ENCODE measurements at regions of chr4 and their contacts with region 1.

Region 1: DNA sequence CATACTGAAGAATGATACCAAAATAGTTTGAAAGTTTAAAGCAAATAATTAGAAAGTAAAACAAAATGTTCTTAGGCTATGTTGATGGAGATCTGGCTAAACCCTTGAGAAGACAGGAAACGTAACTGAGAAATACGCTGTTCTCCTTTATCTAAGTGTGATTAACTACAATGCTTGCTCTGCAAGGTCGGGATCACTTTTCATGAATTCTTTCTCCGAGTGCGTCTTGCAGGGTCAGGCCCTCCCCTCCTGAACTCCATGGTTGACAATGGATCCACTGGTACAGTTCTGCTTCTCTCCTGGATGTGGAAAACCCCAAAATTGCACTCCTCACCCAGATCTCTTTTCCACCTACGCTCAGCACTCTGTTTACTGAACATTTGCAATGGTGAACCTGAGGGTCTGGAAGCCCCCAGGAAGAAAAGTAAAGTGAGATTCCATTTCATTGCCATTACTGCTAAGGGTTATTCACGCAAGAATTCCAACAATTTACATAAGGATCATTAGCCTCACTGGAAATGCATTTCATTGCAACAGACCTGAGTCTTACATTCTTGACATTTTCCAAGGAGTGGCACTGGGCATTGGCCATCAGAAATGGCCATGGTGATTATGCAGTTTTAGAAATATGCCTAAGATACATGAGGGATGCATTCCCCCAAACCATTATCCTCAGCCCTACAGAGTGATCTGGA is 24.6 kb upstream of the WWC2 start:
- DNase-seq: no peak
- H3K4me3 Mint-ChIP-seq: no peak overlapping the region
- H3K27ac Mint-ChIP-seq: no peak overlapping the region
- H3K4me1 Mint-ChIP-seq: no peaks in the 10 kb centered on the region
- H3K27me3 Mint-ChIP-seq: peaks cover 15% of the 10 kb centered on the region

Region 2: DNA sequence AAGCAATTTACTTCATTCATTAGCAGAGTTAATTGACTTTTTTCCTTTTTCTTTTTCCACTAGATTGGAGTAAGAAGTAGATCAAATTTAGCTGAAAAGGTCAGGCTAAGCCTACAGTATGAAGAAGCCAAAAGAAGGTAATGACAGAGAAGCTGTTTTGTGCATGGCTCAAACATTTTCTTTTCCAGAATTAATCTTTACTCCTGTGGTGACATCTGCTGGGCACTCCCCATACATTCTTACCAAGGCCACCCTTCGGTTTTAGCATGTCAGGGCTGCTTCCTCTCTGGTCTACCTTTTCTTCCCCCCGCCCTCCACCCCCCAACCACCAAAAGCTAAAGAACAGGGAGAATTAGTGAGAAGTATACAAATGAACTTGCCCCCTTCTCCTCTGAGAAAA is 175.4 kb after region 1 on chr4:
- CTCF ChIA-PET with region 1: interaction called, 45 read pairs
- POLR2A ChIA-PET with region 1: no interaction called
- DNase-seq: no peak
- H3K4me3 Mint-ChIP-seq: no peak overlapping the region
- H3K27ac Mint-ChIP-seq: no peak overlapping the region
- H3K4me1 Mint-ChIP-seq: no peaks in the 10 kb centered on the region
- H3K27me3 Mint-ChIP-seq: no peaks in the 10 kb centered on the region

Region 3: GRCh38 chr4:183256756-183257385 is 182.4 kb after region 1 on chr4:
- CTCF ChIA-PET with region 1: interaction called, 74 read pairs
- POLR2A ChIA-PET with region 1: no interaction called
- DNase-seq: peak; percentile 32
- H3K4me3 Mint-ChIP-seq: no peak overlapping the region
- H3K27ac Mint-ChIP-seq: no peak overlapping the region
- H3K4me1 Mint-ChIP-seq: no peaks in the 10 kb centered on the region
- H3K27me3 Mint-ChIP-seq: peaks cover 2% of the 10 kb centered on the region

Region 4: DNA sequence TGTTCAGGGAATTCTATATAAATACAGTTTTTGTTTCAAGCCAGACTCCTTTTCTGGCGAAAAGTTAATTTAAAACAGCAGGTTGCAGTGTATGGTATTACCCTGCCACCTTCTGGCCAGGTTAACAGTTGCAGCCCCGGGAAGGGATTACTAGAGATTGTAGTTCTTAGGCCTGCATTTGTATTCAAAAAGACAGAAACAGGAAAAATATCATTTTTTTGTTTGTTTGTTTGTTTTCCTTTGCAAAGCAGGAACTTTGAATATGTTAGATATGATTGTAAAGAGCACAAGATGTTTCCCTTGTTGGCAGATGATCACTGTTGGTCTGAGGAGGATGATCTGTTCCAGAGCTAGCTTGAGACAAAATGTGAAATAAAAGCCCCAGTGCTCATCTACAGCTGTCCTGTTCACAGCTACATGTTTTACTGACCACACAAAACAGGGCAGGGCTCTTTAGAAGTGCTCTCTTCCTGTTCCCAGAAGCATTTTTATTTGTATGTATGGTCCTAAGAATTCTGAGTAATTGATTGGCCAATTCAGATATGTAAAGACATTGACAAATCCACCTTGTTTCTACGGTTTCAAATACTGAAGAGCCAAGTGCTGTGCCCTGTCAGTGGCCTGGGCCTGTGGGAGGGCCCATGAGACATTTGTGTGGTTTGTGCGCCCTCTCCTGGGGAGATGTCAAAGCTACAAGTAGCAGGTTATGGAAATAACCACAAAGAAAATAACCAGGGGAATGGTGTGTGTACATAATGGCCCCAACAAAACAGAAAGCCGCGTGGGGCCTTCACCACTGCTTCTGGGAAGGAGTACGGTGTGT is 187.7 kb after region 1 on chr4:
- CTCF ChIA-PET with region 1: interaction called, 74 read pairs
- POLR2A ChIA-PET with region 1: no interaction called
- DNase-seq: peak; percentile 80
- H3K4me3 Mint-ChIP-seq: no peak overlapping the region
- H3K27ac Mint-ChIP-seq: peak overlapping the region; percentile 48
- H3K4me1 Mint-ChIP-seq: peaks cover 6% of the 10 kb centered on the region
- H3K27me3 Mint-ChIP-seq: peaks cover 2% of the 10 kb centered on the region

Measured in activated CD4-positive, alpha-beta memory T cell treated with anti-CD3 and anti-CD28 coated beads, Interleukin-2, amount 10 ng/mL, durations not matched to agents 7 days and 5 days (primary cell).